Panc1 (cell line): ENCODE measurements at regions of chr17 and their contacts with region 1.

Region 1: DNA sequence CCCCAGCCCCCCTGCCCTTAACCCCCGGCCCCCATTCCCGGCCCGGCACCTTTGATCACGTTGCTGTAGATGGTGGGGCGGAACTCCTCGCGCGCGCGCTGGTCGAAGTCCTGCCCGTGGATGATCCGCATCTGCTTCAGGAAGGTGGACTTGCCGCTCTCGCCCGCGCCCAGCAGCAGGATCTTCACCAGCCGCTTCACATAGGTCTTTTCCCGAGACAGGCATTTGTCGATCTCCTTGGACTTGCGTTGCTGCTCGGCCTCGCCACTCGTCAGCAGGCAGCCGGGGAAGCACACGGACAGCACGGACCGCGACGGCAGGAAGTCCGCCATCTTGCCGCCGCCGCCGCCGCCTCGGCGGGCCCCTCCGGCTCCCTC is 290 bp downstream of the GNA13 start:
- DNase-seq: no peak
- ATAC-seq: no peak
- H3K4me3 ChIP-seq: peak overlapping the region; percentile 69 to 94
- H3K27ac ChIP-seq: peak overlapping the region; percentile 70
- H3K4me1 ChIP-seq: peaks cover 14% of the 10 kb centered on the region; the same call in 1 of the 2 replicates
- H3K27me3 ChIP-seq: no peaks in the 10 kb centered on the region
- CTCF ChIP-seq: no peak

Region 2: GRCh38 chr17:65037157-65037556 is 19.1 kb before region 1 on chr17:
- CTCF ChIA-PET with region 1: no interaction called
- POLR2A ChIA-PET with region 1: interaction called, 15 read pairs
- in situ Hi-C with region 1: no loop called
- intact Hi-C with region 1: no loop called
- DNase-seq: no peak
- ATAC-seq: no peak
- H3K4me3 ChIP-seq: no peak overlapping the region
- H3K27ac ChIP-seq: no peak overlapping the region
- H3K4me1 ChIP-seq: no peaks in the 10 kb centered on the region
- H3K27me3 ChIP-seq: no peaks in the 10 kb centered on the region
- CTCF ChIP-seq: no peak

Region 3: GRCh38 chr17:65086465-65086864 is 30.2 kb after region 1 on chr17:
- CTCF ChIA-PET with region 1: interaction called, 7 read pairs
- POLR2A ChIA-PET with region 1: interaction called, 16 read pairs
- in situ Hi-C with region 1: no loop called
- intact Hi-C with region 1: no loop called
- DNase-seq: no peak
- ATAC-seq: no peak
- H3K4me3 ChIP-seq: no peak overlapping the region
- H3K27ac ChIP-seq: no peak overlapping the region
- H3K4me1 ChIP-seq: no peaks in the 10 kb centered on the region
- H3K27me3 ChIP-seq: no peaks in the 10 kb centered on the region
- CTCF ChIP-seq: no peak